CD8-positive, alpha-beta memory T cell (primary cell): ENCODE measurements at regions of chr3 and their contacts with region 1.

Region 1: DNA sequence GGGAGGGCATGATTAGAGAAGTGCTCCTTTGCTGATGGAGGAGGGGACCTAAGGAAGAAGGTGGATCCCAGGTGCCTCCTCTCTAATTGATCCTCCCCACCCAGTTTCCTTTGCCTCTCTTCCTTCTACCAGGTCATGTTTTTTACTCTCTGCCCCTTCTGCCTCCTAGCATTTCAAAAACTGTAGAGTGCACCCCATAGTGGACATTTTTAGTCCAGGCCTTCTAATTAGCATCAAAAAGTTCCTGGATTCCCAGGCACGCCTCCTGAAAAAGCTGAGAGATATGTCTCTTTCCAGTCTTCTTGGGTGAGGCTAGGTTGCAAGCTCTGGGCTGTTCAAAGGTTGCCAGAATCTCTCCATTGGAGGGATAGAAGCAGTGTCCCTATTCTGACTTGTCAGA is 18.7 kb upstream of the ITGB5 start:
- DNase-seq: no peak
- H3K4me3 ChIP-seq: no peak overlapping the region
- H3K4me3 Mint-ChIP-seq: no peak overlapping the region
- H3K27ac ChIP-seq: no peak overlapping the region
- H3K27ac Mint-ChIP-seq: no peak overlapping the region
- H3K4me1 ChIP-seq: peaks cover 4% of the 10 kb centered on the region
- H3K4me1 Mint-ChIP-seq: peaks cover 2 to 6% (median 4%) of the 10 kb centered on the region in 3 donors
- H3K27me3 ChIP-seq: peaks cover 5% of the 10 kb centered on the region
- H3K27me3 Mint-ChIP-seq: peaks cover 10 to 37% of the 10 kb centered on the region in 2 donors

Region 2: GRCh38 chr3:123605789-123606234 is 1300.0 kb before region 1 on chr3:
- CTCF ChIA-PET with region 1: no interaction called
- POLR2A ChIA-PET with region 1: no interaction called
- DNase-seq: no peak
- H3K4me3 ChIP-seq: no peak overlapping the region
- H3K4me3 Mint-ChIP-seq: no peak overlapping the region
- H3K27ac ChIP-seq: no peak overlapping the region
- H3K27ac Mint-ChIP-seq: no peak overlapping the region
- H3K4me1 ChIP-seq: no peaks in the 10 kb centered on the region
- H3K4me1 Mint-ChIP-seq: peaks cover 2 to 4% (median 3%) of the 10 kb centered on the region in 3 donors
- H3K27me3 ChIP-seq: no peaks in the 10 kb centered on the region
- H3K27me3 Mint-ChIP-seq: no peaks in the 10 kb centered on the region

Region 3: DNA sequence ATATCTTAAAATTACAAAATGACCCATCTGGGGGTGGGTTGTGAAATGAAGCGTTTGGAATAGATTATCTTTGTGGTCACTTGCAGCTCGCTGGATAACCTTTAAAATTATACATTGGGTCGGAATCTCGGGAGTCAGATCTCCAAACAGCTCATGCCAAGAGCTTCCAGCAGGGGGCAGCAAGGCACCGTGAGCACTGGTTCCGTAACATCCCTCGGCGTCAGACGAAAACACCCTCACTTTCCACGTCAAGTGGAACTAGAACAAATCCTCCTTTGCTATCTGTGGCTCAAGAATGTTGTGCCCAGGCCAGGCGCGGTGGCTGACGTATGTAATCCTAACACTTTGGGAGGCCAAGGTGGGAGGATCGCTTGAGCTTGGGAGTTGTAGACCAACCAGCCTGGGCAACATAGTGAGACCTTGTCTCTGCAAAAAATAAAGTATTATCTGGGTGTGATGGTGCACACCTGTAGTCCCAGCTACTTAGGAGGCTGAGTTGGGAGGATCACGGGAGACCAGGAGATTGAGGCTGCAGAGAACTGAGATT is 144.5 kb before region 1 on chr3:
- CTCF ChIA-PET with region 1: interaction called, 129 read pairs
- POLR2A ChIA-PET with region 1: interaction called, 3 read pairs
- DNase-seq: peak; percentile 56 to 78 (median 61)
- H3K4me3 ChIP-seq: peak overlapping the region; percentile 2
- H3K4me3 Mint-ChIP-seq: peak overlapping the region in 6 of 7 donors; percentile 61 to 80 (median 72)
- H3K27ac ChIP-seq: no peak overlapping the region
- H3K27ac Mint-ChIP-seq: peak overlapping the region in 5 of 8 donors; percentile 20 to 70 (median 52)
- H3K4me1 ChIP-seq: no peaks in the 10 kb centered on the region
- H3K4me1 Mint-ChIP-seq: peaks cover 5 to 8% (median 5%) of the 10 kb centered on the region in 3 donors
- H3K27me3 ChIP-seq: no peaks in the 10 kb centered on the region
- H3K27me3 Mint-ChIP-seq: peaks cover 6 to 8% of the 10 kb centered on the region in 2 donors

Region 4: GRCh38 chr3:124768812-124769211 is 137.0 kb before region 1 on chr3:
- CTCF ChIA-PET with region 1: interaction called, 129 read pairs
- POLR2A ChIA-PET with region 1: interaction called, 5 read pairs
- DNase-seq: no peak
- H3K4me3 ChIP-seq: no peak overlapping the region
- H3K4me3 Mint-ChIP-seq: no peak overlapping the region
- H3K27ac ChIP-seq: no peak overlapping the region
- H3K27ac Mint-ChIP-seq: no peak overlapping the region
- H3K4me1 ChIP-seq: no peaks in the 10 kb centered on the region
- H3K4me1 Mint-ChIP-seq: no peaks in the 10 kb centered on the region
- H3K27me3 ChIP-seq: no peaks in the 10 kb centered on the region
- H3K27me3 Mint-ChIP-seq: peaks cover 15 to 40% of the 10 kb centered on the region in 2 donors

Region 5: DNA sequence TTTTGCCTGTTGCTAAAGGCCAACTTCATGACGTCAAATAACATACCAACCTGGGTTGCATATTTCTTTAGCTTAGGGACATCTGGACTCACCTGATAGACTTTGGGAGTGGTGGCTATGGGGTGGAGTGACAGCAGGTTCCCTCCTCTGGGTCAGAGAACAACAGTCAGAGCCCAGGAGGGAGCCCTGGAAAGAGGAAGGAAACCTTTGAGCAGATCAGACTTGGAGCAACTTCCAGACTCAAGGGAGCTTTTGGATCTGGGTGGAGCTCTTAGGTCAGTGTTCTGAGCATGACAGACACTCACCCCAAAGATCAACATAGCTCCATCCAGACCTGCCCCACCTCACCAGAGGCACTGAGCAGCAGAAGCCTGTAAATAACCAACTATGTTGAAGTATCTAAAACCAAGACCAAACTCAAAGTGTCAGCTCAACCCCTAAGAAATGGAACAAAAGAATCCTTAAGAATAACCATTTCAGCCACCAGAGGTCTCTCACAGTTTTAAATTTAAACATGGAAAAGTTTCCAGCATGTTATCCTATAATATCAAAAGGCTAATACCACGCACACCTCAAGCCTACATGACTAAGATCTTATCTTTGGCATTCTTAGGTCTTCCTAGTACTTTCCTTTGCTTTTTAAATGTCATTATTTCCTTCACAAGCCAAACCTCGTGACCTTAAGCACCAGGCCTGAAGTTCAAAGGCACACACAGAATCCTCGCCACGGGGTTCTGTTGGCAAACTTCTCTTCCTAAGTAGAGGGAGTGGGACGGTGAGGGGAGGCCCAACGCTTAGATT is 119.2 kb before region 1 on chr3:
- CTCF ChIA-PET with region 1: interaction called, 17 read pairs
- POLR2A ChIA-PET with region 1: no interaction called
- DNase-seq: no peak
- H3K4me3 ChIP-seq: no peak overlapping the region
- H3K4me3 Mint-ChIP-seq: no peak overlapping the region
- H3K27ac ChIP-seq: no peak overlapping the region
- H3K27ac Mint-ChIP-seq: no peak overlapping the region
- H3K4me1 ChIP-seq: no peaks in the 10 kb centered on the region
- H3K4me1 Mint-ChIP-seq: no peaks in the 10 kb centered on the region
- H3K27me3 ChIP-seq: no peaks in the 10 kb centered on the region
- H3K27me3 Mint-ChIP-seq: peaks cover 0 to 4% of the 10 kb centered on the region in 2 donors